Heart right ventricle (tissue), 16 donors: ENCODE measurements at regions of chr18 and their contacts with region 1.

Region 1: DNA sequence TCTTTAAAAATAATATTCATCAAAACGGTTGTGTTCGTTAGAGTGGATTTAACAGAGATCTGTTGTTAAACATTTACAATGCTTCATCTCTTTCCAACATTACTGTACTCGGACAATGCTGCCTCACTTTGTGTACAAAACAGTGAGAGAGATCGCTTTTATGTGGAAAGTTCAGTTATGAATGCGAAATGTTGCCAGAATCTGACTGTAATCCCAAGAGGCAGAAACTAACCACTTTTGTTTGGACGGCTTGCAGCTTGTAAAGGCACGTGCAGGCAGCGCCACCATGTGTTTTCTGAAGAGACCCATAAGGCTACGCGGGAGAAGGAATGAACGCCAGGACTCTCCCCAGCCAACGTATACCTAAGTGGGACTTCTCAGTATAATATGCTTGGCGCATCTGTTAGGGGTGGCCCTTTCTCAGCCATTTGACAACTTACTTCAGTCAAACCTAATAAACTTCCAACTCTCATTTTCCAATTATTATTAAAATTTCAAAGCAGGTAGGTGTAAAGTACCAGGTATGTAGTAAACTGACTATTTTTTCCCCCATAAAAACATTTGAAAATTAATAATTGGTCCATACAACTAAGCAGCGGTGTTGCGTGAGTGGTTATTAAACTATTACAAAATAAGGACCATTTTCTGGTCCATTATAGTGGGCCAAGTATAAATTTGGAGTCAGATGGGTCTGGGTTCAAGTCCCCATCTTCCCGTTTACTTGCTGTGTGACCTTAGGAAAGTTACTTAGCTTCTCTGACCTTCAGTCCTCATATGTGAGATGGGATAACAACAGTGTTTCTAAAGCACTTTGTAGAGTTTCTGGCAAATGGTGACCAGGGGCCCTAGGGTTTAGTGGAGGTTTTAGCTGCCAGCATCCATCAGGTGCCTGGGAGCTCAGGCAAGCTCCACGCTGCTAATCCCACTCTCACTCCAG is 5.6 kb upstream of the NAPG start:
- DNase-seq: peak; percentile 78 to 88
- ATAC-seq: peak; percentile 79 to 93 (median 88)
- H3K4me3 ChIP-seq: no peak overlapping the region
- H3K27ac ChIP-seq: peak overlapping the region in 1 of 10 donors; percentile 36
- H3K4me1 ChIP-seq: peaks cover 4 to 31% (median 19%) of the 10 kb centered on the region in 9 donors
- H3K27me3 ChIP-seq: no peaks in the 10 kb centered on the region
- CTCF ChIP-seq: peak; percentile 69 to 92 (median 82)

Region 2: GRCh38 chr18:9971313-9971920 is 548.9 kb before region 1 on chr18:
- intact Hi-C with region 1: loop called (anchors 1 to 5 kb)
- DNase-seq: peak in 1 of 2 donors; percentile 83
- ATAC-seq: peak; percentile 48 to 82 (median 67)
- H3K4me3 ChIP-seq: no peak overlapping the region
- H3K27ac ChIP-seq: no peak overlapping the region
- H3K4me1 ChIP-seq: peaks cover 0 to 23% (median 3%) of the 10 kb centered on the region in 9 donors
- H3K27me3 ChIP-seq: peaks cover 0 to 24% (median 0%) of the 10 kb centered on the region in 7 donors
- CTCF ChIP-seq: peak; percentile 64 to 89 (median 84)

Region 3: DNA sequence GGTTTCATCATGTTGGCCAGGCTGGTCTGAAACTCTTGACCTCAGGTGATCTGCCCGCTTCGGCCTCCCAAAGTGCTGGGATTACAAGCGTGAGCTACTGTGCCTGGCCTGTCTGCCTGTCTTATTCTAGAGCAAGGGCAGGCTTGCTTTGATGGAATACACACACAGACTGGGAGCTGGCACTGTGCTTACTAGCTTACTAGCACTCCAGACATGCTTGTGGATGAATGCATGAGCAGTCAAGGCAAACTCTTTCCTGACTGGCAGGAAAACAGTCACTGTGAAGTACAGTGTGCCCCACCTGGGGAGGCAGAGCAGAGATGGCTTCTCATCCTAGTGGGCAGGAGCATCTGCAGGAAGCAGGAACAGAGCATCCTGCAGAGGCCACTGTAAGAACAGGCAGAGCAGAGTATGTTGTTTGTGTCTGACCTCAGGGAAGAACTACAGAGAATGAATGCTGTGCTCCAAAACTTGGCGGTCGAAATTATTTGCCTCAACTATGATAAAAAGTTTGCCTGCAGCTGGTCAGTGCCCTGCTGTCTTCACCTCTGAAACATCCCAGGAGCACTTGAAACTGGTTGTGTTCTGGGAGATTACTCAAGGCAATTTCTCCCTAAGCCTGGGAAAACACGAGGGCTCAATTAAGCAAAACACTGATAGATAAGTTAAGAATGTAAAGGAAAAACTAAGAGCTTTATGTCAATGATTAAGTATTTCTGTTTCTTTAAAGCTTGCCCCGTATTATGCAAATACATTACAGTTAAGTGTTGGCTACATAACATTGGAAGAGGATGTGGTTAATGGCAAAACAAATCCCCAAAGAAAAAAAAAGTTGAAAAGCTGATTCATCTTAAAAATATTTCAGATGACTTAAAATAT is 504.1 kb before region 1 on chr18:
- intact Hi-C with region 1: loop called in 2 of 10 experiments (anchors 5 kb)
- DNase-seq: peak in 1 of 2 donors; percentile 56
- ATAC-seq: peak; percentile 70 to 88 (median 84)
- H3K4me3 ChIP-seq: no peak overlapping the region
- H3K27ac ChIP-seq: peak overlapping the region; percentile 56 to 87 (median 70)
- H3K4me1 ChIP-seq: peaks cover 4 to 54% (median 42%) of the 10 kb centered on the region in 9 donors
- H3K27me3 ChIP-seq: no peaks in the 10 kb centered on the region
- CTCF ChIP-seq: peak in 7 of 9 donors; percentile 7 to 64 (median 47)

Region 4: GRCh38 chr18:10131460-10132395 is 388.5 kb before region 1 on chr18:
- intact Hi-C with region 1: loop called in 1 of 10 experiments (anchors 10 kb)
- DNase-seq: peak in 1 of 2 donors; percentile 23
- ATAC-seq: peak; percentile 59 to 82 (median 68)
- H3K4me3 ChIP-seq: peak overlapping the region in 9 of 10 donors; percentile 21 to 50 (median 44)
- H3K27ac ChIP-seq: peak overlapping the region in 7 of 10 donors; percentile 1 to 68 (median 50)
- H3K4me1 ChIP-seq: peaks cover 8 to 22% (median 16%) of the 10 kb centered on the region in 9 donors
- H3K27me3 ChIP-seq: peaks cover 0 to 20% (median 0%) of the 10 kb centered on the region in 7 donors
- CTCF ChIP-seq: peak in 1 of 9 donors; percentile 6

Region 5: DNA sequence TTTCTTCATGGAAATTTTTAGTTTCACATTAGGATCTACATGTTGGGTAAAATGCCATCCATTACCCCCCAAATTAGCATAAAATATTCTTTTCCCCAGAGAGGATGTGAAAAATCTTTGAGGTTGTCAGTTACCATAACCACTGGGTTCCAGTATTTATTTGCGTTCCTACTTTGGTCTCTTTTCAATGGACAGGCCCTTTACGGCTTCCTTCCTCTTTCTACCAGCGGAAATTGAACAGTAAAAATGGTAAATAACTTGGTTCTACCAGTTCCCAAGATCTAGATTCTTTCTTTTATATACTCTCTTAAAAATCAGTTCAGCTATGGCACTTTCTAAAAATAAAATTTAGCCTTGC is 235.0 kb before region 1 on chr18:
- intact Hi-C with region 1: no loop called
- DNase-seq: no peak
- ATAC-seq: peak in 1 of 8 donors; percentile 58
- H3K4me3 ChIP-seq: no peak overlapping the region
- H3K27ac ChIP-seq: peak overlapping the region in 1 of 10 donors; percentile 67
- H3K4me1 ChIP-seq: peaks cover 0 to 23% (median 0%) of the 10 kb centered on the region in 9 donors
- H3K27me3 ChIP-seq: no peaks in the 10 kb centered on the region
- CTCF ChIP-seq: no peak

Region 6: DNA sequence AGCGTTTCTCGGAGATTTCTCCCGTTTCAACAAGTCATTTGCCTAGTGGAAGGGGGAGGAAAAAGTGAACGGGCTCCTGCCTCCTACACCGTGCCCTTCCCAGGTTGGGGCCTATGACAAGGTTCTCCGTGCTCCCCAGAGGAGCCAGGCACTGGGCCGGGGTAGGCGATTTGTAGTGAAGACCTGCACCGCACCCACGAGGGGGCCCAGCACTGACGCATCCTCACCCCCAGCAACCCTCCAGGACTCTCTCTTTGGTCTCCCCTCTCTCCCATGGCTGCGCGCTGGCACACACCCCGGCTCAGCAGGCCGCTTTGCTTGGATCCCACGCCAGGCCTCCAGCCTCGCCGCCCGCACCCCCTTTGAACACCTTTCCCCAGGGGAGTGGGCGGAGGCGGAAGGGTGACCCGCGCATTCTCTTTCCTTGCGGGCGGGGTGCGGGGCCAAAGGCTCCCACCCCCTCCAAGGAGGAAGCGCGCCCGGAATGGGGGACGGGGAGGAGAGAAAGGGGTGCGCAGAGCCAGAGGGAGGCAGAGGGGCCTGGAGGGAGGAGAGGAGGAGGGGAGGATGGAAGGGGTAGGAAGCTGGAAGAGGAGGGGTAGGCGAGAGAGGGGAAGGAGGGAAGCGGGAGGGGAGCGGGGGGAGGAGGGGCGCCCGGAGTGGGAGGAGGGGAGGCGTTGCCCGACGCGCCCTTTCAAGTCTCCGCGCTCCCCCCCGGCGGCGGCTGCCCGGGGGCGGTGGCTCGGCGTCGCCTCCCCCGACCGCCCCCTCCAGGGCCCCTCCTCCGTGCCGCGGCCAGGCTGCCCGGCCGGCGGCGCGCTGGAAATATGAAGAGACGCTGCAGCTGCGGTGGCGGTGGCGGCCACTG is 66.2 kb before region 1 on chr18 and contains the start of gene APCDD1:
- intact Hi-C with region 1: loop called in 1 of 10 experiments (anchors 10 kb)
- DNase-seq: peak; percentile 67 to 80
- ATAC-seq: peak; percentile 78 to 93 (median 86)
- H3K4me3 ChIP-seq: peak within 1 kb of the TSS; percentile 53 to 79 (median 68)
- H3K27ac ChIP-seq: peak within 1 kb of the TSS; percentile 74 to 87 (median 80)
- H3K4me1 ChIP-seq: peaks cover 0 to 42% (median 21%) of the 10 kb centered on the region in 9 donors
- H3K27me3 ChIP-seq: peaks cover 0 to 54% (median 0%) of the 10 kb centered on the region in 7 donors
- CTCF ChIP-seq: peak in 1 of 9 donors; percentile 14
- total RNA-seq, gene APCDD1: 10.2 to 36.4 (median 17.6) TPM